CD4-positive, alpha-beta memory T cell (primary cell): ENCODE measurements at regions of chr11 and their contacts with region 1.

Region 1: GRCh38 chr11:44565211-44565952 is at the start of gene CD82:
- DNase-seq: peak; percentile 93 to 96 (median 95)
- H3K4me3 ChIP-seq: peak within 1 kb of the TSS; percentile 59 to 97
- H3K4me3 Mint-ChIP-seq: peak within 1 kb of the TSS; percentile 85 to 94 (median 92)
- H3K27ac ChIP-seq: peak within 1 kb of the TSS; percentile 82
- H3K27ac Mint-ChIP-seq: peak within 1 kb of the TSS; percentile 93 to 96 (median 95)
- H3K4me1 ChIP-seq: peaks cover 47% of the 10 kb centered on the region
- H3K4me1 Mint-ChIP-seq: peaks cover 40 to 90% (median 56%) of the 10 kb centered on the region in 4 donors
- H3K27me3 ChIP-seq: no peaks in the 10 kb centered on the region
- H3K27me3 Mint-ChIP-seq: no peaks in the 10 kb centered on the region
- total RNA-seq, gene CD82: 130 to 133 TPM

Region 2: GRCh38 chr11:44538375-44539054 is 26.9 kb before region 1 on chr11:
- CTCF ChIA-PET with region 1: no interaction called
- POLR2A ChIA-PET with region 1: no interaction called
- intact Hi-C with region 1: no loop called
- DNase-seq: peak; percentile 53 to 70 (median 62)
- H3K4me3 ChIP-seq: no peak overlapping the region
- H3K4me3 Mint-ChIP-seq: no peak overlapping the region
- H3K27ac ChIP-seq: no peak overlapping the region
- H3K27ac Mint-ChIP-seq: no peak overlapping the region
- H3K4me1 ChIP-seq: no peaks in the 10 kb centered on the region
- H3K4me1 Mint-ChIP-seq: peaks cover 0 to 3% (median 0%) of the 10 kb centered on the region in 4 donors
- H3K27me3 ChIP-seq: no peaks in the 10 kb centered on the region
- H3K27me3 Mint-ChIP-seq: peaks cover 1 to 2% of the 10 kb centered on the region in 2 donors

Region 3: GRCh38 chr11:44585421-44585820 is 20.0 kb after region 1 on chr11:
- CTCF ChIA-PET with region 1: interaction called, 6 read pairs
- POLR2A ChIA-PET with region 1: interaction called, 287 read pairs
- intact Hi-C with region 1: loop called (anchors 2 kb)
- DNase-seq: no peak
- H3K4me3 ChIP-seq: no peak overlapping the region
- H3K4me3 Mint-ChIP-seq: no peak overlapping the region
- H3K27ac ChIP-seq: no peak overlapping the region
- H3K27ac Mint-ChIP-seq: peak overlapping the region in 5 of 7 donors; percentile 64 to 78 (median 68)
- H3K4me1 ChIP-seq: peaks cover 59% of the 10 kb centered on the region
- H3K4me1 Mint-ChIP-seq: peaks cover 30 to 89% (median 47%) of the 10 kb centered on the region in 4 donors
- H3K27me3 ChIP-seq: no peaks in the 10 kb centered on the region
- H3K27me3 Mint-ChIP-seq: no peaks in the 10 kb centered on the region

Region 4: DNA sequence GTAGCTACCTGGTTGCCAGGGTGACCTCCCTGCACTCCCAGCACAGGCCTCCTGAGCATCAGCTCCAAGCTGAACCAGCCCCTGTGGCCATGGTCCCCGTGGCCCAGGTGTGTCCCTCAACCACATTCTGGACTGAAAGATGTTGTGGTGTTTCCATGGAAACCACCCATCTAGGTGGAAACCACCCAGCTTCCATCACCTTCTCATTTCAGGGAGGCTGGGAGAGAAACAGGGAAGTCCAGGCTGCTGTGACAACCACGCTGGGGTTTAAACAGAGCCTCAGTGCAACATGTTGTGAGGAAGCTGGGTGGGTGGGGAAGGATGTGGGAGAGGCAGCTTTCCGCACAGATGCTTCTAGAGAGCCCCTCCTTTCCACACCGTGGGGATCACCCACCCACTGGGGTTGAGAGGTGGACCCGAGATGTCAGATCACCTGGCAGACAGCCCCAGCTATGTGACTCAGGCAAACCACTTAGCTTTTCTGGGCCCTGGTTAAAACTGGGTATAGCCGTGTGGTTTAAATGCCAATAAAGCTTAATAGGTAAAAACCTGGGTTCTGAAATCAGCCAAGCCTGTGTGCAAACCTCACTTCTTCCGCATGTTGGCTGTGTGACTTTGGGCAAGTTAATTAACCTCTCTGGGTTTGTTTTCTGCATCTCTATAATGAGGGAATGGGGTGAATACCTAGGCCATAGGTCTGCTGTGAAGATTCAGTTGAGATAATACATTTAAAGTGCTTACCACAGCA is 46.5 kb after region 1 on chr11:
- CTCF ChIA-PET with region 1: interaction called, 699 read pairs
- POLR2A ChIA-PET with region 1: interaction called, 397 read pairs
- intact Hi-C with region 1: loop called (anchors 1 kb)
- DNase-seq: peak; percentile 75 to 94 (median 77)
- H3K4me3 ChIP-seq: no peak overlapping the region
- H3K4me3 Mint-ChIP-seq: peak overlapping the region in 7 of 8 donors; percentile 22 to 70 (median 52)
- H3K27ac ChIP-seq: peak overlapping the region; percentile 53
- H3K27ac Mint-ChIP-seq: peak overlapping the region; percentile 83 to 96 (median 92)
- H3K4me1 ChIP-seq: peaks cover 100% of the 10 kb centered on the region
- H3K4me1 Mint-ChIP-seq: peaks cover 54 to 100% (median 80%) of the 10 kb centered on the region in 4 donors
- H3K27me3 ChIP-seq: no peaks in the 10 kb centered on the region
- H3K27me3 Mint-ChIP-seq: no peaks in the 10 kb centered on the region

Region 5: GRCh38 chr11:44727373-44728287 is 162.2 kb after region 1 on chr11:
- CTCF ChIA-PET with region 1: no interaction called
- POLR2A ChIA-PET with region 1: interaction called, 3 read pairs
- intact Hi-C with region 1: loop called (anchors 5 kb)
- DNase-seq: peak; percentile 77 to 82 (median 79)
- H3K4me3 ChIP-seq: peak overlapping the region; percentile 17 to 74
- H3K4me3 Mint-ChIP-seq: peak overlapping the region; percentile 86 to 94 (median 92)
- H3K27ac ChIP-seq: peak overlapping the region; percentile 66
- H3K27ac Mint-ChIP-seq: peak overlapping the region; percentile 86 to 94 (median 93)
- H3K4me1 ChIP-seq: peaks cover 57% of the 10 kb centered on the region
- H3K4me1 Mint-ChIP-seq: peaks cover 43 to 64% (median 53%) of the 10 kb centered on the region in 4 donors
- H3K27me3 ChIP-seq: no peaks in the 10 kb centered on the region
- H3K27me3 Mint-ChIP-seq: no peaks in the 10 kb centered on the region

Region 6: DNA sequence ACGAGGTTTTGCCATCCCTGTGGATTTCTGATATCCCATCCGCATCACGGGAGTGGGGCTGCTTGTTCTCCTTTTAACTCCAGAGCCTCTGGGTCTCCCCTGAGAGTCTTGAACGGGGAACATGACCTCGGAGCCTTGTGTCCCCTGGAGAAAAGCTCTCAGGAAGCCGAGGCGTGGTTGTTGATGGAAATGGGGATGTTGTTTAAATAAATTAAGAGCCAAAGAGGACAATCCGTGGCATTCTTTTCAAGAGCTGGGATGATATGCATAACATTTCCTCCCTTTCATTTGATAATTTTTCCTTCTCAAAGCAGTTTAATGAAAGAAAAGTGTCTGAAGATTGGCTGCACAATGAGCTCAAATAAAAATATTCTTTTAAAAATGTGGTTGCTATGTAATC is 175.6 kb after region 1 on chr11:
- CTCF ChIA-PET with region 1: no interaction called
- POLR2A ChIA-PET with region 1: no interaction called
- intact Hi-C with region 1: no loop called
- DNase-seq: no peak
- H3K4me3 ChIP-seq: no peak overlapping the region
- H3K4me3 Mint-ChIP-seq: no peak overlapping the region
- H3K27ac ChIP-seq: no peak overlapping the region
- H3K27ac Mint-ChIP-seq: peak overlapping the region in 3 of 7 donors; percentile 30 to 70 (median 65)
- H3K4me1 ChIP-seq: peaks cover 33% of the 10 kb centered on the region
- H3K4me1 Mint-ChIP-seq: peaks cover 34 to 91% (median 51%) of the 10 kb centered on the region in 4 donors
- H3K27me3 ChIP-seq: no peaks in the 10 kb centered on the region
- H3K27me3 Mint-ChIP-seq: no peaks in the 10 kb centered on the region

Region 7: GRCh38 chr11:45339729-45340519 is 774.5 kb after region 1 on chr11:
- CTCF ChIA-PET with region 1: no interaction called
- POLR2A ChIA-PET with region 1: no interaction called
- intact Hi-C with region 1: loop called (anchors 10 kb)
- DNase-seq: peak; percentile 85 to 91 (median 87)
- H3K4me3 ChIP-seq: peak overlapping the region in 1 of 2 donors; percentile 36
- H3K4me3 Mint-ChIP-seq: peak overlapping the region; percentile 77 to 89 (median 82)
- H3K27ac ChIP-seq: no peak overlapping the region
- H3K27ac Mint-ChIP-seq: peak overlapping the region in 6 of 7 donors; percentile 16 to 87 (median 68)
- H3K4me1 ChIP-seq: peaks cover 13% of the 10 kb centered on the region
- H3K4me1 Mint-ChIP-seq: peaks cover 7 to 16% (median 10%) of the 10 kb centered on the region in 4 donors
- H3K27me3 ChIP-seq: no peaks in the 10 kb centered on the region
- H3K27me3 Mint-ChIP-seq: peaks cover 15% of the 10 kb centered on the region in 2 donors